ENCODE measurements at regions of chr2 and their contacts with region 1.

Region 1: GRCh38 chr2:157876066-157876787 is at the start of gene ACVR1:
- DNase-seq: peak; percentile 68 to 85 (median 75)
- ATAC-seq: peak; percentile 86
- H3K4me3 ChIP-seq: peak within 1 kb of the TSS; percentile 60
- H3K4me3 Mint-ChIP-seq: peak within 1 kb of the TSS; percentile 90 to 98 (median 96)
- H3K27ac ChIP-seq: peak within 1 kb of the TSS; percentile 77
- H3K27ac Mint-ChIP-seq: peak within 1 kb of the TSS; percentile 83 to 96 (median 90)
- H3K4me1 ChIP-seq: peaks cover 12 to 19% of the 10 kb centered on the region in 2 donors
- H3K4me1 Mint-ChIP-seq: peaks cover 24 to 63% (median 53%) of the 10 kb centered on the region in 7 donors
- H3K27me3 ChIP-seq: no peaks in the 10 kb centered on the region
- H3K27me3 Mint-ChIP-seq: no peaks in the 10 kb centered on the region
- total RNA-seq, gene ACVR1: 13.3 to 42.0 (median 20.6) TPM

Region 2: GRCh38 chr2:156435715-156436496 is 1440.3 kb before region 1 on chr2 and contains the start of gene GPD2:
- CTCF ChIA-PET with region 1: no interaction called
- POLR2A ChIA-PET with region 1: no interaction called
- intact Hi-C with region 1: loop called in 1 of 2 experiments (anchors 10 kb)
- DNase-seq: peak; percentile 37 to 71 (median 58)
- ATAC-seq: peak; percentile 74
- H3K4me3 ChIP-seq: peak within 1 kb of the TSS; percentile 72
- H3K4me3 Mint-ChIP-seq: peak within 1 kb of the TSS; percentile 87 to 100 (median 98)
- H3K27ac ChIP-seq: peak within 1 kb of the TSS; percentile 71
- H3K27ac Mint-ChIP-seq: peak within 1 kb of the TSS; percentile 93 to 98 (median 95)
- H3K4me1 ChIP-seq: peaks cover 16 to 18% of the 10 kb centered on the region in 2 donors
- H3K4me1 Mint-ChIP-seq: peaks cover 25 to 51% (median 38%) of the 10 kb centered on the region in 7 donors
- H3K27me3 ChIP-seq: no peaks in the 10 kb centered on the region
- H3K27me3 Mint-ChIP-seq: no peaks in the 10 kb centered on the region
- total RNA-seq, gene GPD2: 7.8 to 17.1 (median 11.6) TPM

Region 3: GRCh38 chr2:157492189-157492773 is 383.9 kb before region 1 on chr2:
- CTCF ChIA-PET with region 1: no interaction called
- POLR2A ChIA-PET with region 1: no interaction called
- intact Hi-C with region 1: loop called in 1 of 2 experiments (anchors 5 kb)
- DNase-seq: peak; percentile 41 to 79 (median 68)
- ATAC-seq: peak; percentile 91
- H3K4me3 ChIP-seq: no peak overlapping the region
- H3K4me3 Mint-ChIP-seq: peak overlapping the region in 6 of 10 donors; percentile 1 to 39 (median 14)
- H3K27ac ChIP-seq: no peak overlapping the region
- H3K27ac Mint-ChIP-seq: peak overlapping the region in 3 of 9 donors; percentile 9 to 19 (median 13)
- H3K4me1 ChIP-seq: peaks cover 0 to 21% of the 10 kb centered on the region in 2 donors
- H3K4me1 Mint-ChIP-seq: peaks cover 10 to 67% (median 59%) of the 10 kb centered on the region in 7 donors
- H3K27me3 ChIP-seq: no peaks in the 10 kb centered on the region
- H3K27me3 Mint-ChIP-seq: no peaks in the 10 kb centered on the region

Region 4: DNA sequence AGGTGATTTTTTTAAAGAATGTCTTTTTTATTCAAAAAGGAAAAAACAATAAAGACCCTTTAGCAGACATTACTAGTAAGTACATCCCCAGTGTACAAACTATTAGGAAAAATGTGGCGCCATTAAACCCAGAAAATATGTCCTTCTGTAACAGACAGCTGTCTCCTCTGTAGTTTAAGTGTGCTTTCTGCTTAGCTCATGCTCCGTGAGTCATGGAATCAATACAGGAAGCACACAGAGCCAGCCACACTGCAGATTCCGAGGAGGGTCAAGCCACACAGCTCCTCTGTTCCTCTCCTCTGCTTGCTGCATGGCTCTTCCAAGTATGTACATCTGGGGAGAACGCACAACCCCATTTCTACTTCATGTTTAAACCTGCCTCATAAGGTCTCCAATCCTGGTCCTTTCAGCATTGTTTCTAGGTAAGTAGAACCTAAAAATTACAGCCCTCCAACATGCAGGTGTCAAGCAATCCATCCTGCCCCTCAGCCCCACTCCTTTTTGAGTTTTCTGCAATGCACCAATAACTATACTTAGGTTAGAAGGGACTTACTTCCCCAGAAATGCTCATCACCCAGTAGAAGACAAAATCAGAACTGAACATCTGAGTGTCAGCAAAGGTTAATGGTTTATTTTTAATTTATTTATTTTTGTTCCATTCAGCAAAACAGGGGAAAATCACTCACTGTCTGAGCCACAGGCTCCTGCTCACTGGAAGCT is 37.6 kb before region 1 on chr2:
- CTCF ChIA-PET with region 1: no interaction called
- POLR2A ChIA-PET with region 1: no interaction called
- intact Hi-C with region 1: loop called (anchors 2 kb)
- DNase-seq: peak in 2 of 9 donors; percentile 18 to 29
- ATAC-seq: peak; percentile 88
- H3K4me3 ChIP-seq: no peak overlapping the region
- H3K4me3 Mint-ChIP-seq: peak overlapping the region in 6 of 10 donors; percentile 13 to 69 (median 54)
- H3K27ac ChIP-seq: no peak overlapping the region
- H3K27ac Mint-ChIP-seq: peak overlapping the region in 6 of 9 donors; percentile 8 to 82 (median 72)
- H3K4me1 ChIP-seq: peaks cover 0 to 17% of the 10 kb centered on the region in 2 donors
- H3K4me1 Mint-ChIP-seq: peaks cover 24 to 58% (median 54%) of the 10 kb centered on the region in 7 donors
- H3K27me3 ChIP-seq: no peaks in the 10 kb centered on the region
- H3K27me3 Mint-ChIP-seq: no peaks in the 10 kb centered on the region

Region 5: DNA sequence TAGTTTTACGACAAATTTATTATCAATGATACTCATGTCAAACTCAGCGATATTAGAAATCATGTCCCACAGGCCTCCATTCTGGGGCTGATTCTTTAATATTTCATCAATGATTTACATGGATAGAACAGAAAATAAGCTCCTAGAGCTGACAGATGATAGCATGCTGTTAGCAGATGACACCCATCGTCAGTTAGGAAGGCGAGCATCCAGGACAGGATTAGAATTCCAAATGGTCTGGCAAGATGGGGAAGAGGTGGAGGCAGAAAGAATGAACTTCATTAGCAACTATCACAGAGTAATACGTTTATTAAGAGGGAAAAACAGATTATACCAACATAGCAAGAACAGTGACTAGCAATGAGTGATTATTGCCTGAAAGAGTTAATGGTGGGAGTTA is 46.1 kb after region 1 on chr2:
- CTCF ChIA-PET with region 1: no interaction called
- POLR2A ChIA-PET with region 1: no interaction called
- intact Hi-C with region 1: no loop called
- DNase-seq: no peak
- ATAC-seq: no peak
- H3K4me3 ChIP-seq: no peak overlapping the region
- H3K4me3 Mint-ChIP-seq: no peak overlapping the region
- H3K27ac ChIP-seq: no peak overlapping the region
- H3K27ac Mint-ChIP-seq: no peak overlapping the region
- H3K4me1 ChIP-seq: no peaks in the 10 kb centered on the region
- H3K4me1 Mint-ChIP-seq: no peaks in the 10 kb centered on the region
- H3K27me3 ChIP-seq: no peaks in the 10 kb centered on the region
- H3K27me3 Mint-ChIP-seq: peaks cover 0 to 9% (median 2%) of the 10 kb centered on the region in 5 donors

Region 6: GRCh38 chr2:157971697-157972096 is 95.5 kb after region 1 on chr2:
- CTCF ChIA-PET with region 1: no interaction called
- POLR2A ChIA-PET with region 1: no interaction called
- intact Hi-C with region 1: no loop called
- DNase-seq: no peak
- ATAC-seq: no peak
- H3K4me3 ChIP-seq: no peak overlapping the region
- H3K4me3 Mint-ChIP-seq: no peak overlapping the region
- H3K27ac ChIP-seq: no peak overlapping the region
- H3K27ac Mint-ChIP-seq: no peak overlapping the region
- H3K4me1 ChIP-seq: no peaks in the 10 kb centered on the region
- H3K4me1 Mint-ChIP-seq: peaks cover 0 to 3% (median 0%) of the 10 kb centered on the region in 7 donors
- H3K27me3 ChIP-seq: no peaks in the 10 kb centered on the region
- H3K27me3 Mint-ChIP-seq: peaks cover 0 to 17% (median 0%) of the 10 kb centered on the region in 5 donors

Region 7: GRCh38 chr2:159286709-159287441 is 1410.6 kb after region 1 on chr2:
- CTCF ChIA-PET with region 1: no interaction called
- POLR2A ChIA-PET with region 1: no interaction called
- intact Hi-C with region 1: loop called in 1 of 2 experiments (anchors 2 kb)
- DNase-seq: peak; percentile 89 to 97 (median 94)
- ATAC-seq: peak; percentile 99
- H3K4me3 ChIP-seq: peak overlapping the region; percentile 72
- H3K4me3 Mint-ChIP-seq: peak overlapping the region; percentile 80 to 92 (median 89)
- H3K27ac ChIP-seq: peak overlapping the region; percentile 77
- H3K27ac Mint-ChIP-seq: peak overlapping the region; percentile 64 to 97 (median 85)
- H3K4me1 ChIP-seq: peaks cover 8 to 13% of the 10 kb centered on the region in 2 donors
- H3K4me1 Mint-ChIP-seq: peaks cover 15 to 36% (median 31%) of the 10 kb centered on the region in 7 donors
- H3K27me3 ChIP-seq: no peaks in the 10 kb centered on the region
- H3K27me3 Mint-ChIP-seq: no peaks in the 10 kb centered on the region

Measured in naive thymus-derived CD4-positive, alpha-beta T cell (primary cell).